ENCODE measurements at regions of chrX and their contacts with region 1.

Region 1: DNA sequence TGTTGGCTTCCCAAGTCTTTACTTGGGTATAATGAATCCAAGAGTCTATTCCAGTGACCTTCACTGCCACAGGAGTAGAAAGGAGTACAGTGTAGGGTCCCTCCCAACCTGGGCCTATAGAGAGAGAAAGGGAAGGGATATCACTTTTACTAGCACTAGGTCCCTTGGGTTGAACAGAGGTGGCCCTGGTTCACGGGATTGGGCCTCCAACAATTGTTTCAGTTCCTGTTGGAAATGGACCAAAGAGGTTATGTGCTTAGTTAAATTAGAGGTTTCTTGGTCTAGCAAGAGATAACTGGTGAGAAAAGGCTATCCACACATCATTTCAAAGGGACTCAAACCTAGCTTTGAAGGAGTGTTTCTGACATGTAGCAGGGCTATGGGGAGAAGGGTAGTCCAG is 57.1 kb upstream of the MED14 start:
- DNase-seq: no peak
- ATAC-seq: no peak
- H3K4me3 ChIP-seq: no peak overlapping the region
- H3K27ac ChIP-seq: no peak overlapping the region
- H3K4me1 ChIP-seq: peaks cover 1% of the 10 kb centered on the region
- H3K27me3 ChIP-seq: no peaks in the 10 kb centered on the region

Region 2: GRCh38 chrX:40434947-40435346 is 357.5 kb before region 1 on chrX:
- intact Hi-C with region 1: no loop called
- DNase-seq: peak; percentile 28 to 75 (median 75)
- ATAC-seq: peak; percentile 64 to 76
- H3K4me3 ChIP-seq: no peak overlapping the region
- H3K27ac ChIP-seq: no peak overlapping the region
- H3K4me1 ChIP-seq: no peaks in the 10 kb centered on the region
- H3K27me3 ChIP-seq: no peaks in the 10 kb centered on the region

Region 3: GRCh38 chrX:40651620-40652223 is 140.7 kb before region 1 on chrX:
- intact Hi-C with region 1: loop called in 2 of 4 experiments (anchors 5 to 10 kb)
- DNase-seq: peak in 2 of 3 donors; percentile 62 to 73
- ATAC-seq: no peak
- H3K4me3 ChIP-seq: no peak overlapping the region
- H3K27ac ChIP-seq: no peak overlapping the region
- H3K4me1 ChIP-seq: no peaks in the 10 kb centered on the region
- H3K27me3 ChIP-seq: no peaks in the 10 kb centered on the region

Region 4: GRCh38 chrX:40663880-40664633 is 128.4 kb before region 1 on chrX:
- intact Hi-C with region 1: loop called in 2 of 4 experiments (anchors 10 kb)
- DNase-seq: no peak
- ATAC-seq: no peak
- H3K4me3 ChIP-seq: no peak overlapping the region
- H3K27ac ChIP-seq: no peak overlapping the region
- H3K4me1 ChIP-seq: no peaks in the 10 kb centered on the region
- H3K27me3 ChIP-seq: no peaks in the 10 kb centered on the region